ENCODE measurements at regions of chr1 and their contacts with region 1.

Region 1: GRCh38 chr1:52253401-52253800 is 111.5 kb downstream of the ZFYVE9 start:
- DNase-seq: no peak
- ATAC-seq: no peak
- H3K4me3 ChIP-seq: no peak overlapping the region
- H3K4me1 ChIP-seq: no peaks in the 10 kb centered on the region
- CTCF ChIP-seq: no peak

Region 2: GRCh38 chr1:52281518-52281917 is 28.1 kb after region 1 on chr1:
- intact Hi-C with region 1: loop called in 1 of 2 experiments (anchors 2 kb)
- DNase-seq: no peak
- ATAC-seq: no peak
- H3K4me3 ChIP-seq: no peak overlapping the region
- H3K4me1 ChIP-seq: no peaks in the 10 kb centered on the region
- CTCF ChIP-seq: no peak

Region 3: DNA sequence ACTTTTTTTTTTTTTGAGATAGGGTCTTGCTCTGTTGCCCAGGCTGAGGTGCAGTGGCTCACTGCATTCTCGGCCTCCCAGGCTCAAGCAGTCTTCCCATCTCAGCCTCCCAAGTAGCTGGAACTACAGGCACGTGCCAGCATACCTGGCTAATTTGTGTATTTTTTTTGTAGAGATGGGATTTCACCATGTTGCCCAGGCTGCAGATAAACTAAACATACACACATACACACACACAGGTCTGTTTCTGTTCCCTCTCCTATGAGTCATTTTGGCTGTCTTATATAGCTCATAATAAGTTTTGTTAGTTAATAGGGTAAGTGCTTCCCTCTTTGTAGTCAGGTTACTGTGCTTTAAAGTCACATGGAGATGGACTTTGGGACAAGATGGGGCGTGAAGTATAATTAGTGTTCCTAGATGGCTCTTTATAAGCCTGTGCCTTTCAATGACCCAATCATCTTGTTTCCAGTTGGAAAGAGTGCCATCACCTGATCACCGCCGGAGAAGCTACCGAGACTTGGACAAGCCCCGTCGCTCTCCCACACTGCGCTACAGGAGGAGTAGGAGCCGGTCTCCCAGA is 160.1 kb after region 1 on chr1:
- intact Hi-C with region 1: no loop called
- DNase-seq: peak; percentile 67 to 77 (median 69)
- ATAC-seq: peak; percentile 95
- H3K4me3 ChIP-seq: no peak overlapping the region
- H3K4me1 ChIP-seq: peaks cover 4% of the 10 kb centered on the region
- CTCF ChIP-seq: no peak

Region 4: GRCh38 chr1:53110370-53111072 is 857.1 kb after region 1 on chr1:
- intact Hi-C with region 1: no loop called
- DNase-seq: peak in 2 of 3 donors; percentile 29 to 38
- ATAC-seq: no peak
- H3K4me3 ChIP-seq: no peak overlapping the region
- H3K4me1 ChIP-seq: peaks cover 18% of the 10 kb centered on the region
- CTCF ChIP-seq: no peak